Activated naive CD4-positive, alpha-beta T cell treated with anti-CD3 and anti-CD28 coated beads for 36 hours (primary cell): ENCODE measurements at regions of chr19 and their contacts with region 1.

Region 1: DNA sequence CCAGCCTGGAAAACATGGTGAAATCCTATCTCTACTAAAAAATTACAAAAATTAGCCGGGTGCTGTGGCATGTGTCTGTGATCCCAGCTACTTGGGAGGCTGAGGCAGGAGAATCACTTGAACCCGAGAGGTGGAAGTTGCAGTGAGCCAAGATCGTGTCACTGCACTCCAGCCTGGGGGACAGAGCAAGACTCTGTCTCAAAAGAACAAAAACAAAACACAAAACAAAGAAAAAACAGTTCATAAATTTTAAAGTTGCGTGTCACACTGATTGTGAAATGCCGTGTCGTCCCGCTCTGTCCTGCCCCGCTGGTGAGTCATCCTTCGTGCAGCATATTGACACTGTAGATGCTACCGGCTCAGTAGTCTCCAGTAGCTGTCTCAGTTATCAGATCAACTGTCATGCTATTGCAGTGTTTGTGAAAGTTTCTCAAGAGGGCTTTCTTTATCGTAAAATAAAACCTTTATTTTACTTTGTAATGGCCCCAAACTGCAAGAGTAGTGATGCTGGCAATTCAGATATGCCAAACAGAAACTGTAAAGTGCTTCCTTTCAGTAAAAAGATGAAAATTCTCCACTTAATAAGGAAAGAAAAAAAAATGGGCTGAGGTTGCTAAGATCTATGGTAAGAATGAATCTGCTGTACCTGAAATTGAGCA is 36.4 kb upstream of the IGFL1 start:
- DNase-seq: no peak
- H3K4me3 Mint-ChIP-seq: no peak overlapping the region
- H3K27ac Mint-ChIP-seq: no peak overlapping the region
- H3K4me1 Mint-ChIP-seq: no peaks in the 10 kb centered on the region
- H3K27me3 Mint-ChIP-seq: peaks cover 51% of the 10 kb centered on the region

Region 2: GRCh38 chr19:46022431-46023310 is 170.4 kb before region 1 on chr19 and contains the start of gene PGLYRP1:
- CTCF ChIA-PET with region 1: interaction called, 12 read pairs
- intact Hi-C with region 1: no loop called
- DNase-seq: no peak
- H3K4me3 Mint-ChIP-seq: no peak within 1 kb of the TSS
- H3K27ac Mint-ChIP-seq: no peak within 1 kb of the TSS
- H3K4me1 Mint-ChIP-seq: peaks cover 9% of the 10 kb centered on the region
- H3K27me3 Mint-ChIP-seq: peaks cover 12% of the 10 kb centered on the region
- total RNA-seq, gene PGLYRP1: not detected

Region 3: DNA sequence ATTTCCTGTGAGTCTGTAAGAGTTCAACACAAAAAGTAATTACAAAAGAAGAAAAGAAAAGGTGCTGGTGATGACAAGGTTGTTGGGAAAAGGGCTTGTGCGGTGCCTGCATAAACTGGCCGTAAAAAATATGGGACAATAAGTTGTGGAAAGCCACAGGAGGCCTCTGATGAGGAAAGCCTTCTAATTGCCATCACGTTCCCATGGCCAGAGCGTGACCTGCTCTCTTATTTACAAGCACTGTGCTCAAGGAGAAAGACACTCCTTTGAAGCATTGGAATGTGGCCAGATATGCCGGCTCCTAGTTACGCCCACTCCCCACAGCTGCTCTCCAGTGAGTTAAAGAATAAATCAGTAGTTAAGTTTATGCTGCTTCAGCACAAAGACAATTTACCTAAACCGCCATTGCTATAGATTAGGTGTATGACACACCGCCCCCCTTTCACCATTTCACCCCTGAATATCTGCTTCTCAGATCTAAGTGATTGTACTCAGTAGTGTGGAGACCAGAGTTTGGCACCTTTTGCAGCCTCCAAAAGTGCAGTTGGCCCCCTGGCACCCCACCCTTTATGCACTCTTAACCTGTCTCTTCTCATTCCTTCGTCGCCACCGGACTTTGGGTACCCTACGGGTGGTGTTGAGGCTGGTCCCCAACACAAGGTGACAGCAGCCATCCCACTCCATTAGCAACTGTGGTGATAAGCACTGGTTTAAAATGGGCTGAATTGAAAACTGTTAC is 162.1 kb before region 1 on chr19:
- CTCF ChIA-PET with region 1: interaction called, 12 read pairs
- intact Hi-C with region 1: loop called (anchors 1 kb)
- DNase-seq: no peak
- H3K4me3 Mint-ChIP-seq: no peak overlapping the region
- H3K27ac Mint-ChIP-seq: no peak overlapping the region
- H3K4me1 Mint-ChIP-seq: peaks cover 9% of the 10 kb centered on the region
- H3K27me3 Mint-ChIP-seq: peaks cover 3% of the 10 kb centered on the region